Breast epithelium (tissue), 4 donors: ENCODE measurements at regions of chr13 and their contacts with region 1.

Region 1: GRCh38 chr13:77207943-77208342 is 119.0 kb downstream of the MYCBP2 start:
- DNase-seq: no peak
- H3K4me3 ChIP-seq: no peak overlapping the region
- H3K27ac ChIP-seq: no peak overlapping the region
- H3K4me1 ChIP-seq: no peaks in the 10 kb centered on the region
- H3K27me3 ChIP-seq: no peaks in the 10 kb centered on the region
- CTCF ChIP-seq: no peak
- POLR2A ChIP-seq: no peak

Region 2: GRCh38 chr13:76560791-76561190 is 647.2 kb before region 1 on chr13:
- intact Hi-C with region 1: no loop called
- DNase-seq: no peak
- H3K4me3 ChIP-seq: no peak overlapping the region
- H3K27ac ChIP-seq: no peak overlapping the region
- H3K4me1 ChIP-seq: no peaks in the 10 kb centered on the region
- H3K27me3 ChIP-seq: no peaks in the 10 kb centered on the region
- CTCF ChIP-seq: no peak
- POLR2A ChIP-seq: no peak

Region 3: GRCh38 chr13:77026818-77027585 is 180.9 kb before region 1 on chr13 and contains the start of gene FBXL3:
- intact Hi-C with region 1: no loop called
- DNase-seq: peak; percentile 79 to 81
- H3K4me3 ChIP-seq: peak within 1 kb of the TSS; percentile 92 to 100 (median 97)
- H3K27ac ChIP-seq: peak within 1 kb of the TSS; percentile 99
- H3K4me1 ChIP-seq: peaks cover 0 to 6% of the 10 kb centered on the region in 2 donors
- H3K27me3 ChIP-seq: no peaks in the 10 kb centered on the region
- CTCF ChIP-seq: no peak
- POLR2A ChIP-seq: no peak
- total RNA-seq, gene FBXL3: 110 to 129 (median 128) TPM

Region 4: GRCh38 chr13:77062097-77062496 is 145.8 kb before region 1 on chr13:
- intact Hi-C with region 1: loop called (anchors 5 kb)
- DNase-seq: no peak
- H3K4me3 ChIP-seq: no peak overlapping the region
- H3K27ac ChIP-seq: no peak overlapping the region
- H3K4me1 ChIP-seq: no peaks in the 10 kb centered on the region
- H3K27me3 ChIP-seq: no peaks in the 10 kb centered on the region
- CTCF ChIP-seq: no peak
- POLR2A ChIP-seq: no peak